CD4-positive, alpha-beta T cell (primary cell): ENCODE measurements at regions of chr10 and their contacts with region 1.

Region 1: DNA sequence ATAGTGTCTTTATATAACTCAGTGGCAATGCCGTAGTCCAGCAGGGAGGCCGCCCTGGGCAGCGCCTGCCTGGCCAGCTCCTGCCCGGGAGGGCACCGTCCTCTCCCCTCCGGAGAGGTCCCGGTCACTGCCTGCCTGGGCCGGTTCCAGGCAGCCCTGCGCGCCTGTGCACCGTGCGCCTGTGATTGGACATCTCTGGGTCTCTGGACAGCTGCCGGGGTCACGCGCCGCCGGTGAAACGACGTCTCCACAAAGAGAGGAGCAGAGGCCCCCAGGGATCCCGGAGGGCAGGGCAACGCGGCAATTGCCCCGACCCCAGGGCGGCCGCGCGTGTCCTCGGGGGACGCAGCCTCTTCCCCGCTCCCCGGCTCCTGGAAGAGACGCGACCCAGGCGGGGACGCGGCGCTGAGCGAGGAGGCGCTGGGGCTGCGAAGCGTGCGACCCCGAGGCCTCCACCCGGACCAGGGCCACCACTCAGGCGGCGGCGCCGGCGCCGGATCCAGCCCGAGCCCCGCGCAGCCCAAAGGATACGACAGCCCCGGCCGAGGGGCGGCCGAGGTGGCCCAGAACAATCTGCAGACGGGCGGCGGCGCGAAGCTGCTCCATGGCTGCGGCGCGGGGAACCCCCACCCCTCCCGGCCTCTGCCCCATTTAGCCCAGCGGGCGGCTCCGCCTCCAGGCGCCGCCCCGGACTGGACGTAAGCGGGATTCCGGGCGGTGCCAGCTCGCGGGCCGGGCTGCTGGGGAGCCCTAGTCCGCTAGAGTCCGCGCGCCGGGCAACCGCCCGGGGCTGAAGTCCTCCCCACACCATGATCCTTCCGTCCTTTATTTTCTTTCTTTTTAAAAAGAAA is at the start of gene PHYH:
- DNase-seq: peak; percentile 58 to 94 (median 74)
- ATAC-seq: peak; percentile 50
- H3K4me3 ChIP-seq: peak within 1 kb of the TSS; percentile 71
- H3K4me3 Mint-ChIP-seq: peak within 1 kb of the TSS; percentile 91
- H3K27ac ChIP-seq: peak within 1 kb of the TSS; percentile 85 to 89
- H3K27ac Mint-ChIP-seq: peak within 1 kb of the TSS; percentile 94
- H3K4me1 ChIP-seq: peaks cover 36% of the 10 kb centered on the region
- H3K4me1 Mint-ChIP-seq: peaks cover 24% of the 10 kb centered on the region
- H3K27me3 ChIP-seq: no peaks in the 10 kb centered on the region
- H3K27me3 Mint-ChIP-seq: no peaks in the 10 kb centered on the region
- CTCF ChIP-seq: no peak
- total RNA-seq, gene PHYH: 8.5 to 10.0 TPM

Region 2: GRCh38 chr10:12348870-12349628 is 950.6 kb before region 1 on chr10 and contains the start of gene CAMK1D:
- CTCF ChIA-PET with region 1: no interaction called
- POLR2A ChIA-PET with region 1: interaction called, 5 read pairs
- intact Hi-C with region 1: loop called in 1 of 2 experiments (anchors 10 kb)
- DNase-seq: peak; percentile 84 to 96 (median 90)
- ATAC-seq: peak; percentile 60
- H3K4me3 ChIP-seq: peak within 1 kb of the TSS; percentile 95
- H3K4me3 Mint-ChIP-seq: peak within 1 kb of the TSS; percentile 97
- H3K27ac ChIP-seq: peak within 1 kb of the TSS; percentile 38 to 84
- H3K27ac Mint-ChIP-seq: peak within 1 kb of the TSS; percentile 93
- H3K4me1 ChIP-seq: peaks cover 28% of the 10 kb centered on the region
- H3K4me1 Mint-ChIP-seq: peaks cover 46% of the 10 kb centered on the region
- H3K27me3 ChIP-seq: no peaks in the 10 kb centered on the region
- H3K27me3 Mint-ChIP-seq: no peaks in the 10 kb centered on the region
- CTCF ChIP-seq: peak; percentile 20
- total RNA-seq, gene CAMK1D: 28.8 to 35.3 TPM

Region 3: DNA sequence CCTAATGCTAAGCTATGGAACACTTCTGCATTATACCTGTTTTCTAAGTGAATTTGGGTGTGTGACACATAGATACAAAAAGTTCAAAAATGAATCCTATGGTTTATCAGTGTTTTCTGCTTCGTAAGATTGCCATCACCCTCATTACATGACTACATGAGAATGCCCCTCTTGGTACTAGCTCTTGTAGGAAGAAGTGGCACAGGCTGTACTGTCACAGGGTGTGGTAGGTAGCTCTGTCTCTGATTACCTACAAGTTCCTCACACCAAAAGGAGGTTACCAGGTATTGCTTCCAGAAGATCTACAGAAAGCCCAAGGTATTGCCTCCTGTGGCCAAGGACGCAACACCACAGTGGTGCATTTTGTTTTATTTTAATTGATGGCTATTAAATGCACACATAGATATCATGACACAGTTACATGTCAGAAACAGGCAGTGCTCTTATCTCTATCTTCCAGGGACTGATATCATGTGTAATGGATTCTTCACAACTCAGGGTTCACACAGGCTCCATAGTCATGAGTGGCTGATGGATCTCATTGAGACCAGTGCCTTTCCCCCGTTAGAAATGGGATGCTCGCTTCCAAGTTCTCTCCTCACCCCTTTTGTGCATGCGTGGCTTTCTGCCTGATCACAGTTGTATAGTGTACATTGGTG is 193.1 kb before region 1 on chr10:
- CTCF ChIA-PET with region 1: no interaction called
- POLR2A ChIA-PET with region 1: interaction called, 16 read pairs
- intact Hi-C with region 1: no loop called
- DNase-seq: no peak
- ATAC-seq: no peak
- H3K4me3 ChIP-seq: no peak overlapping the region
- H3K4me3 Mint-ChIP-seq: peak overlapping the region; percentile 57
- H3K27ac ChIP-seq: peak overlapping the region; percentile 9 to 66
- H3K27ac Mint-ChIP-seq: peak overlapping the region; percentile 94
- H3K4me1 ChIP-seq: peaks cover 76% of the 10 kb centered on the region
- H3K4me1 Mint-ChIP-seq: peaks cover 83% of the 10 kb centered on the region
- H3K27me3 ChIP-seq: no peaks in the 10 kb centered on the region
- H3K27me3 Mint-ChIP-seq: no peaks in the 10 kb centered on the region
- CTCF ChIP-seq: no peak

Region 4: GRCh38 chr10:13206546-13207443 is 92.9 kb before region 1 on chr10:
- CTCF ChIA-PET with region 1: interaction called, 14 read pairs
- POLR2A ChIA-PET with region 1: interaction called, 3 read pairs
- intact Hi-C with region 1: loop called in 1 of 2 experiments (anchors 5 kb)
- DNase-seq: peak in 3 of 14 experiments; percentile 4 to 25 (median 22)
- ATAC-seq: no peak
- H3K4me3 ChIP-seq: no peak overlapping the region
- H3K4me3 Mint-ChIP-seq: no peak overlapping the region
- H3K27ac ChIP-seq: no peak overlapping the region
- H3K27ac Mint-ChIP-seq: no peak overlapping the region
- H3K4me1 ChIP-seq: no peaks in the 10 kb centered on the region
- H3K4me1 Mint-ChIP-seq: no peaks in the 10 kb centered on the region
- H3K27me3 ChIP-seq: no peaks in the 10 kb centered on the region
- H3K27me3 Mint-ChIP-seq: no peaks in the 10 kb centered on the region
- CTCF ChIP-seq: peak; percentile 31

Region 5: GRCh38 chr10:13328613-13329012 is 29.0 kb after region 1 on chr10:
- CTCF ChIA-PET with region 1: no interaction called
- POLR2A ChIA-PET with region 1: interaction called, 10 read pairs
- intact Hi-C with region 1: no loop called
- DNase-seq: no peak
- ATAC-seq: no peak
- H3K4me3 ChIP-seq: no peak overlapping the region
- H3K4me3 Mint-ChIP-seq: no peak overlapping the region
- H3K27ac ChIP-seq: no peak overlapping the region
- H3K27ac Mint-ChIP-seq: no peak overlapping the region
- H3K4me1 ChIP-seq: no peaks in the 10 kb centered on the region
- H3K4me1 Mint-ChIP-seq: no peaks in the 10 kb centered on the region
- H3K27me3 ChIP-seq: no peaks in the 10 kb centered on the region
- H3K27me3 Mint-ChIP-seq: no peaks in the 10 kb centered on the region
- CTCF ChIP-seq: no peak

Region 6: GRCh38 chr10:13348216-13349017 is 48.8 kb after region 1 on chr10 and contains the start of gene SEPHS1:
- CTCF ChIA-PET with region 1: interaction called, 40 read pairs
- POLR2A ChIA-PET with region 1: interaction called, 244 read pairs
- intact Hi-C with region 1: loop called (anchors 2 kb)
- DNase-seq: peak; percentile 67 to 91 (median 81)
- ATAC-seq: peak; percentile 69
- H3K4me3 ChIP-seq: peak within 1 kb of the TSS; percentile 91
- H3K4me3 Mint-ChIP-seq: peak within 1 kb of the TSS; percentile 98
- H3K27ac ChIP-seq: peak within 1 kb of the TSS; percentile 63 to 83
- H3K27ac Mint-ChIP-seq: peak within 1 kb of the TSS; percentile 93
- H3K4me1 ChIP-seq: peaks cover 50% of the 10 kb centered on the region
- H3K4me1 Mint-ChIP-seq: peaks cover 69% of the 10 kb centered on the region
- H3K27me3 ChIP-seq: no peaks in the 10 kb centered on the region
- H3K27me3 Mint-ChIP-seq: no peaks in the 10 kb centered on the region
- CTCF ChIP-seq: no peak
- total RNA-seq, gene SEPHS1: 13.1 to 17.9 TPM

Region 7: DNA sequence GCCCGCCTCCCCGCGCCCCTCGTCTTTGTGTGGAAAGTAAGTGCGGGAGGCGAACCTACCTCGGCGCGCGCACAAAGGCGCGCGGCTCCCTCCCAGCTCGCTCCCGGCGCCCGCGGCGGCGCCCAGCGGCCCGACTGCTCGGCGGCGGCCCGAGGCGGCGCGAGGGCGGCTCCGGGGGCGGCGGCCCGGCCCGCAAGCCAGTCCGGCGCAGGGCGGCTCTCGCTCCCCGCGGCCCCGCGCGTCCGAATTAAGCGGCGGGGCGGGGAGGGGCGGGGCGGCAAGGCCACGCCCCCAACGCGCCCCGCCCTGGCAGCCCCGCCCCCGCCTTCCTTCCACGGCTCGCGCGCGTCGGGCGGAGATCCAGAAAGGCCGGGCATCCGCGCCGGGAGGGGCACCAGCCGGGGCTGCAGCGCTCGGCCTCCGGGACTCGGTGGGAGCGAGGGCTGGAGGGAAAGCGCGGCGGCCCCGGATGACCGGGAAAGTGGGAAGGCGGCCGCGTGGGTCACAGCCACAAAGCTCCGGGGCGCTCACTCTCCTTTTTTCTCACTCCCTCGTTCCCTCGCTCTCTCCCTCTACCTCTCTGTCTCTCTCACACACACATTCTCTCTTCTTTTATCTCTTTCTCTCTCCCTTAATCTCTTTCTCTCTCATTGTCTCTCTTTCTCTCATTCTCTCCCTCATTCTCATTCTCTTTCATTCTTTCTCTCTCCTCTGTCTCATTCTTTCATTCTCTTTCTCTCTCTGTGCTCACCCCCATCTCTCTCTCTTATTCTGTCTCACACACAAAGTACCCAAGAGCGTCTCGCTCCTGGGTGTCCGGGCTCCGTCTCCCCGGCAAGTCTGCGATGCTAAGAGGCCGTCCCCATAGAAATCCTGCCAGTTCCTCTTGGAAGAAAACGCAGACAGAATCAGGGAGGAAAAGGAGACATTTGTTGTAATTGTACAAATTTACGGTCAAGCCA is 1304.8 kb after region 1 on chr10:
- CTCF ChIA-PET with region 1: no interaction called
- POLR2A ChIA-PET with region 1: no interaction called
- intact Hi-C with region 1: no loop called
- DNase-seq: peak; percentile 48 to 89 (median 70)
- ATAC-seq: peak; percentile 56
- H3K4me3 ChIP-seq: peak overlapping the region; percentile 65
- H3K4me3 Mint-ChIP-seq: peak overlapping the region; percentile 90
- H3K27ac ChIP-seq: peak overlapping the region in 1 of 2 donors; percentile 26
- H3K27ac Mint-ChIP-seq: peak overlapping the region; percentile 90
- H3K4me1 ChIP-seq: peaks cover 48% of the 10 kb centered on the region
- H3K4me1 Mint-ChIP-seq: peaks cover 57% of the 10 kb centered on the region
- H3K27me3 ChIP-seq: no peaks in the 10 kb centered on the region
- H3K27me3 Mint-ChIP-seq: no peaks in the 10 kb centered on the region
- CTCF ChIP-seq: no peak